Aorta (tissue), 5 donors: ENCODE measurements at regions of chr6 and their contacts with region 1.

Region 1: GRCh38 chr6:10747251-10747972 is at the start of gene TMEM14B:
- DNase-seq: peak; percentile 100
- ATAC-seq: peak; percentile 100
- H3K4me3 ChIP-seq: peak within 1 kb of the TSS; percentile 71 to 96
- H3K27ac ChIP-seq: peak within 1 kb of the TSS in 1 of 2 donors; percentile 75
- H3K4me1 ChIP-seq: peaks cover 0 to 2% of the 10 kb centered on the region in 2 donors
- H3K27me3 ChIP-seq: no peaks in the 10 kb centered on the region
- total RNA-seq, gene TMEM14B: 50.3 to 51.9 TPM

Region 2: DNA sequence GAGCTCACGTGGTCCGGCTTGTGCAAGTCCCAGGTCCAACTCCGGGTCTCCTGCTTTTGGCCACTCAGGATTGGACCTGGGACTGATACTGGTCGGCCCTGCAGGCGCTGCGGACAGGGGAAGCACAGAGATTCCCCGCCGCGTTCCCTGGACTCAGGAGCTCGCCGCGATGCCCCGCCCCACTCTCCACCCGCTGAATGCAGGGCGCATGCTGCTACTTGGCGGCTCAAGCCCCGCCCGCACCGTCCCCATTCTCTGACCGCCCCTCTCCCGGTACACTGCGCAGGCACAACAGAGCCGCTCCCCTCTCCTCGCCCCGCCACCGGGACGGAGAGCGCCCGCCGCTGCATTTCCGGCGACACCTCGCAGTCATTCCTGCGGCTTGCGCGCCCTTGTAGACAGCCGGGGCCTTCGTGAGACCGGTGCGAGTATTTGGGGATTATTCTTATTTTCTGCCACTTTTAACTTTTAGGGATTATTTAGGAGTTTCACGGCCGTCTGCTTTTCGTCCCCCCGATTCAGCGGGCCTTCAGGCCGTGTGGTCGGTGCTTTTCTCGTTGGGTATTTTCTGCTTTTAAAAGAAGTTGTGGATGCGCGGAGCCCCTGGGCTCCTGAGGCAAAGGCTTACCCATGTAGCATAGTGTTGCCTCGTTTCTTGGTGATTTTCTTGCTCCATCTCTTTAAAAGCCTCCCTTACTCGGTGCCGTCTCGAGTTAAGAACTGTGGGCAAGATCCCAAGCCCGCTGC is 24.4 kb before region 1 on chr6 and contains the start of gene TMEM14C:
- intact Hi-C with region 1: loop called (anchors 2 kb)
- DNase-seq: peak; percentile 99 to 100
- ATAC-seq: peak; percentile 99
- H3K4me3 ChIP-seq: peak within 1 kb of the TSS; percentile 68 to 78
- H3K27ac ChIP-seq: peak within 1 kb of the TSS; percentile 9 to 85
- H3K4me1 ChIP-seq: peaks cover 3 to 5% of the 10 kb centered on the region in 2 donors
- H3K27me3 ChIP-seq: no peaks in the 10 kb centered on the region
- total RNA-seq, gene TMEM14C: 72.8 to 85.3 TPM